Cardiac septum (tissue), 1 donor: ENCODE measurements at regions of chr4 and their contacts with region 1.

Region 1: GRCh38 chr4:14916554-14917297 is 85.6 kb upstream of the CPEB2 start:
- DNase-seq: no peak

Region 2: GRCh38 chr4:14375816-14376215 is 540.9 kb before region 1 on chr4:
- intact Hi-C with region 1: no loop called
- DNase-seq: no peak

Region 3: DNA sequence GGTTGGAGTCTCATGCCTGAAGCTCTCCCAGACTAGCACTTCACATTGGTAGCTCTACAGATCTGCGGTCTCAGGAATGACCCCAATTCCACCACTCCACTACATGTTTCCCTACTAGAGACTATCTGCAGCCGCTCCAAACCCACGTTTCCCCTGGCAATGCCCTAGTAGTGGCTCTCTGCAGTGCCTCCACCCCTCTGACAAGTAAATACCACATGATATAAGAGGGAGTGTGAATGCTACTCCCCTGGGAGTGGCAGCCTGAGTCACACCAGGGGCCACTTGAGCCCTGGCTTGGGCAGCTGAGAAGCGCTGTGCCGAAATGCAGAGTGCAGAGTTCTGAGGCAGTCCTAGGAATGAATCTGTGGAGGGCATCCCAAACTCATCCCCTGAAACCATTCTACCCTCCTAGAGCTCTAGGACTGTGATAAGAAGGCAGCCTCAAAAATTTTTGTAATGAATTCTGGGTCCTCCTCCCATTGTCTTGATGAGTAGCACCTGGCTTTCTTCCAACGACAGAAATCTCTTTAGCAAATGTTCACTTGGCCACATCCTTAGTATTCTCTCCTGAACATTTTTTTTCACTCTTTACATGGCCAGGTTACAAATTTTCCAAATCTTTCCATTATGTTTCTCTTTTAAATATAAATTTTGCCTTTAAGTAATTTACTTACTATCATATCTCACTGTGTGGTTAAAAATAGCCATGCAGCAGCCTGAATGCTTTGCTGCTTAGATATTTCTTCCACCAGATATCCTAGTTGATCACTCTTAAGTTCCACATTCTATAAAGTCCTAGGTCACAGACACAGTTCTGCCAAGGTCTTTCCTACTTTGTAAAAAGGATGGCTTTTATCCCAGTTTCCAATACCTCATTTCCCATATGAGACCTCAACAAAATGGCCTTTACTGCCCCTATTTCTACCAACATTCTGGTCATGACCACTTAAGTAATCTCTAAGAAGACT is 74.6 kb before region 1 on chr4:
- intact Hi-C with region 1: loop called (anchors 2 kb)
- DNase-seq: peak; percentile 76